Caco-2 (cell line): ENCODE measurements at regions of chr1 and their contacts with region 1.

Region 1: DNA sequence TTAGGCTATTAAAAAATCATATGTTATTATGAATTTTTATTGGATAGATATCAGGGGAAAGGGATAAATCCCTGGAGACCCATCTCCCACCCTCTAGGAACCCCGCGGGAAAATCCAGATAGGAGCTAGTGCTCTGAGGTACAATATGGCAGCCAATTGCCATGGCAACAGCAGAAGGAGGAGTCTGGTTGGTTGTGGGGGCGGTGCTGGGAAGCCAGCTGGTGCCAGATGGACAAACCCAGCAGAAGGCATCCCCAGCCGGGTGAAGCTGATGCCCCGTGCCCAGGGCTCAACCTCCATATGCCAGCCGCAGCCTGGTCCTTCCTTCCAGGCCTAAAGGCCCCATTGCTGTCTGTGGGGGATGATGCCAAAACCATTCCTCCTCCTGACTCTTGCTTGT is 38.3 kb downstream of the RHBG start:
- DNase-seq: no peak
- H3K4me3 ChIP-seq: no peak overlapping the region
- H3K4me3 Mint-ChIP-seq: no peak overlapping the region
- H3K27ac Mint-ChIP-seq: no peak overlapping the region
- H3K4me1 ChIP-seq: peaks cover 20% of the 10 kb centered on the region
- H3K4me1 Mint-ChIP-seq: no peaks in the 10 kb centered on the region
- H3K27me3 ChIP-seq: no peaks in the 10 kb centered on the region
- H3K27me3 Mint-ChIP-seq: no peaks in the 10 kb centered on the region
- CTCF ChIP-seq: no peak

Region 2: GRCh38 chr1:156465747-156466365 is 58.5 kb after region 1 on chr1:
- CTCF ChIA-PET with region 1: no interaction called
- POLR2A ChIA-PET with region 1: no interaction called
- intact Hi-C with region 1: no loop called
- DNase-seq: no peak
- H3K4me3 ChIP-seq: no peak overlapping the region
- H3K4me3 Mint-ChIP-seq: no peak overlapping the region
- H3K27ac Mint-ChIP-seq: no peak overlapping the region
- H3K4me1 ChIP-seq: no peaks in the 10 kb centered on the region
- H3K4me1 Mint-ChIP-seq: no peaks in the 10 kb centered on the region
- H3K27me3 ChIP-seq: no peaks in the 10 kb centered on the region
- H3K27me3 Mint-ChIP-seq: no peaks in the 10 kb centered on the region
- CTCF ChIP-seq: peak in 1 of 2 experiments; percentile 21

Region 3: GRCh38 chr1:156601122-156601830 is 193.9 kb after region 1 on chr1 and contains the start of gene GPATCH4:
- CTCF ChIA-PET with region 1: interaction called, 10 read pairs
- POLR2A ChIA-PET with region 1: no interaction called
- intact Hi-C with region 1: no loop called
- DNase-seq: peak; percentile 85
- H3K4me3 ChIP-seq: peak within 1 kb of the TSS; percentile 84
- H3K4me3 Mint-ChIP-seq: peak within 1 kb of the TSS; percentile 79
- H3K27ac Mint-ChIP-seq: peak within 1 kb of the TSS; percentile 88
- H3K4me1 ChIP-seq: peaks cover 8% of the 10 kb centered on the region; the same call in 1 of the 2 replicates
- H3K4me1 Mint-ChIP-seq: no peaks in the 10 kb centered on the region
- H3K27me3 ChIP-seq: no peaks in the 10 kb centered on the region
- H3K27me3 Mint-ChIP-seq: no peaks in the 10 kb centered on the region
- CTCF ChIP-seq: no peak
- total RNA-seq, gene GPATCH4: 52.5 and 53.5 TPM in 2 replicates